ENCODE measurements at regions of chr15 and their contacts with region 1.

Region 1: GRCh38 chr15:98760112-98760826 is 111.9 kb downstream of the IGF1R start:
- DNase-seq: no peak
- ATAC-seq: peak; percentile 44 to 72 (median 62)
- H3K4me3 ChIP-seq: no peak overlapping the region
- H3K27ac ChIP-seq: no peak overlapping the region
- H3K4me1 ChIP-seq: peaks cover 21% of the 10 kb centered on the region
- H3K27me3 ChIP-seq: no peaks in the 10 kb centered on the region
- CTCF ChIP-seq: no peak

Region 2: GRCh38 chr15:98484908-98485307 is 275.4 kb before region 1 on chr15:
- intact Hi-C with region 1: no loop called
- DNase-seq: no peak
- ATAC-seq: no peak
- H3K4me3 ChIP-seq: no peak overlapping the region
- H3K27ac ChIP-seq: no peak overlapping the region
- H3K4me1 ChIP-seq: no peaks in the 10 kb centered on the region
- H3K27me3 ChIP-seq: no peaks in the 10 kb centered on the region
- CTCF ChIP-seq: no peak

Region 3: DNA sequence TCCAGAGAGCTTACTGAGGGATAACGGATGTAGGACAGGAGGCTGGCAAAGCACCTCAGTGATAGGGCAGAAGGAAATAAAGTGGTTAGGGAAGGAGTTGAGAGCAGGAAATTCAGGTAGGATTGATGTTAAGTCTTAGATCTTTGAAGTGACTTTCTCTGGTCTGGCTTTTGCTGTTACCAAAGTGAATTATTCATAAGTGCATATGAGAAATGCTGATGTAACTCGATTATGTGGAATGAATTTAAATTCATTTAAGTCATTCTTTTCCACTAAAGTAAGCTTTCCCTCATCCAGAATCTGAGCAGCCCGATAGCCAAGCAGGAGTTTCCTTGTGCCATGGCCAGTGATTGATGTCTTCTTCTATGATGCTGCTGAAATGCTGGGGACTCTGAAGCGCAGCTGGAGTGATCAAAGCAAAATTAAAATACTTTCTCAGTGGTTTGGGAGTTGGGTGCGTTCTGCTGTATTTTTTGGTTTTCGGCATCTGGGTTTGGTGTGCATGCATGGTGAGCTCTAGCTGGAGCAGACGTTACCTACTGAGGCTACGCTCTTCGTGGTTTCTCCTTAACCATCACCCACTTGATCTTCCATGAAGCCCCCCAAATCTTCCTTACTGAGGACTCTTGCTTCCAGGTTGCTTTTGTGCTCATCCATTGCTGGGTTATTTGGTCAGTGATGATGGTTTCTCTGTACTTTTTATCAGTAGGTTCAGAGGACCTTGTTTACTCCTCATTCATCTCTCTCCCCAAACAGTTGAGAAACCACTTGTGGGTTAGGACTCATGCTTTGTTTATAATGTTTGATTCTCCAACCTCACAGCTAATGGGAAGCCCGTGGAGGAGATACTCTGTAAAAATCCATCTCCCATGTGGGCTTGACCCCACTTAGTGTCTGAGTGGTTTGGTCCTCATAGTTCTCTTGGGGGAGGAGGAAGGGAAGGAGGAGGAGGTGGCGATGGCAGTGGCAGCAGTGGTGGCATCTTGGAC is 39.4 kb before region 1 on chr15:
- intact Hi-C with region 1: loop called in 1 of 2 experiments (anchors 5 kb)
- DNase-seq: no peak
- ATAC-seq: no peak
- H3K4me3 ChIP-seq: no peak overlapping the region
- H3K27ac ChIP-seq: no peak overlapping the region
- H3K4me1 ChIP-seq: peaks cover 34% of the 10 kb centered on the region
- H3K27me3 ChIP-seq: no peaks in the 10 kb centered on the region
- CTCF ChIP-seq: no peak

Measured in psoas muscle (tissue), 8 donors.